ENCODE measurements at regions of chr1 and their contacts with region 1.

Region 1: DNA sequence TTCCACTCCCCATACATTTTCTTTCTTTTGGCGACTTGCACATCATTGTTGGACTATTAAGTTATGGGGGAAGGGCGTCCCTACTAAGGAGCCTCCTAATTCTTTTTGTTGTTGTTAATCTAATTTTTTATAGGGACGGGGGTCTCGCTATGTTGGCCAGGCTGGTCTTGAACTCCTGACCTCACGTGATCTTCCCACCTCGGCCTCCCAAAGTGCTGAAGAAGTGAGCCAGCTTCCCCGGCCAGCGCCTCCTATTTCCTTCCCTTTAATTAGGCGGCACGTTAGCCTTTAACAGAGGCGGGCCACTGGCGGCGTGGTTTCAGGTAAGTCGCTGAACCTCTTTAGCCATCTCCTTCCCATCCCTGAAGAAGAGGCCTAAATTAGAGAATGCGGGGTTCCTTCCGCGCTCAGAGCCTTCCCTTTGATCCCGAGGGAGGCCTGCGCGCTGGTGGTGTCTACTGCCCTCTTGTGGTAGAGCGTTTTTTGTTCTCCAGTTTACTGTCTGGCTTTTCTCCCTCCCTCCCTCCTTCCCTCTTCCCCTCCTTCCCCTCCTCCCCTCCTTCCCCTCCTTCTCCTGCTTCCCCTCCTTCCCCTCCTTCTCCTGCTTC is 38.1 kb downstream of the TNFRSF9 start:
- DNase-seq: peak; percentile 69 to 82
- ATAC-seq: peak; percentile 83
- H3K4me3 ChIP-seq: no peak overlapping the region
- H3K27ac ChIP-seq: no peak overlapping the region
- H3K4me1 ChIP-seq: peaks cover 0 to 3% of the 10 kb centered on the region in 2 donors
- H3K27me3 ChIP-seq: no peaks in the 10 kb centered on the region

Region 2: DNA sequence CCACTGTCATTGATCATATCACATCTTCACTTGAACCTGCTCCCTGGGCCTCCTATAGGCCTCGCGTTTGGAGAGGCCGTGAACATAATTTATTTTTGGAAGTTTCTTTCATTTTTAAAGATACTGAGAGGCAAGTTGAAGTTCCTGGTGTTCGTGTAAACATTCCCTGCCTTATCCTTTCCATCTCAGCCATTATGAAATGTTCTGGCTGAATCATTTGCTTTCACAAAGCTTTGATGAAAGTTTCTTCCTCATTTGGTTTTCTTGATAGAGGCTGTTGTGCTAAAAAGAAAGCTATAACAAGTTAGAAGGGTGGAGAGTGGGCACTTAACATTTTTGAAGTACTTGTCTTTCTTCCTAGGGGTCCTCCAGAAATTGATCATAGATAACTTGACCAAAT is 1101.8 kb before region 1 on chr1:
- intact Hi-C with region 1: no loop called
- DNase-seq: no peak
- ATAC-seq: no peak
- H3K4me3 ChIP-seq: no peak overlapping the region
- H3K27ac ChIP-seq: peak overlapping the region; percentile 32 to 59
- H3K4me1 ChIP-seq: peaks cover 5 to 21% of the 10 kb centered on the region in 2 donors
- H3K27me3 ChIP-seq: no peaks in the 10 kb centered on the region

Region 3: GRCh38 chr1:7667625-7668218 is 234.9 kb before region 1 on chr1:
- intact Hi-C with region 1: loop called (anchors 5 kb)
- DNase-seq: peak; percentile 92 to 96
- ATAC-seq: peak; percentile 90
- H3K4me3 ChIP-seq: no peak overlapping the region
- H3K27ac ChIP-seq: no peak overlapping the region
- H3K4me1 ChIP-seq: no peaks in the 10 kb centered on the region
- H3K27me3 ChIP-seq: no peaks in the 10 kb centered on the region

Region 4: DNA sequence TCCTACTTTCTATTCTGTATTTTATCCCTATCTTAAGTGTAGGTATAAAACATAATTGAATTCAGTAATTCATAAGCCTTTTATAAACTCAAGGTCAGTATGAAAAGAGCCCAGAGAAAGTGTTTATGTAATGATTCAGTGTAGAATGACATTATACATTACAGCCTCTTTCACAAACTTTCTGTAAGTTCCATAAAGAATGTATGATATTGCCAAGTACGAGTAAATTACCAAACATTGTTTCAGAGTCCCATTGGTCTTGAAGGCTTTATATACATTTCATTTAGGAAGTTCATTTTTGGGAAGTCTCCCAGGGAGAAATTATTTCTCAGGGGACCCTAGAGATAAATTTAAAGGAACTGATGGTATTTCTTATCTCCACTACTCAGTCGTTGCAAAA is 169.3 kb before region 1 on chr1:
- intact Hi-C with region 1: no loop called
- DNase-seq: no peak
- ATAC-seq: no peak
- H3K4me3 ChIP-seq: no peak overlapping the region
- H3K27ac ChIP-seq: no peak overlapping the region
- H3K4me1 ChIP-seq: no peaks in the 10 kb centered on the region
- H3K27me3 ChIP-seq: no peaks in the 10 kb centered on the region

Region 5: DNA sequence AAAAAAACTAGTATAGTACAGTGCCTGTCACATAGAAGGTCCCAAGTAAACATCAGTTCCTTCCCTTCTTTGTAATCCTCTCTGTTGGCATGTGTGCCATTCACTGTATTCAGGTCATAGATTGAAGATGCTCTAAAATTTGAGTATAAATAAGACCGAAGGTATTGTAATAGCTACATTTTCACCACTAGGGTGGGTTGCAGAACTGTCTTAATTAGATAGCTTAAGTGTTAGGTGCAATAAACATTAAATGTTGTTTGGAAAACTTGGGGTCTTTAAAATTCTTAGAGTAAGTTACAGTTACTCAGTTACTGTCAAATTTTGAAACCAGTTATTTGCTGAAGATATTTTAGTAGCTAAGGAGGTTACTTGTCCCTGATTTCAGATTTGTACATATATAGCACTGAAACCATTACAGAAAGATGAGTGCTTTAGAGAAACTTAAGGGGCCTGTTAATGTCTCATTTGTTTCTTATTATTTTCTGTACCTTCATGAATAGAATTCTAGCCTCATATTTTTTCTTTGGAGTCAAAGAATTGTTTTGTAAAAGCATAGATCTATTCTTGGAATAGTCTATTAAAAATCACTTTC is 94.2 kb before region 1 on chr1:
- intact Hi-C with region 1: loop called (anchors 1 to 5 kb)
- DNase-seq: no peak
- ATAC-seq: no peak
- H3K4me3 ChIP-seq: no peak overlapping the region
- H3K27ac ChIP-seq: no peak overlapping the region
- H3K4me1 ChIP-seq: no peaks in the 10 kb centered on the region
- H3K27me3 ChIP-seq: no peaks in the 10 kb centered on the region

Region 6: GRCh38 chr1:7856345-7856744 is 46.2 kb before region 1 on chr1:
- intact Hi-C with region 1: no loop called
- DNase-seq: no peak
- ATAC-seq: no peak
- H3K4me3 ChIP-seq: no peak overlapping the region
- H3K27ac ChIP-seq: no peak overlapping the region
- H3K4me1 ChIP-seq: no peaks in the 10 kb centered on the region
- H3K27me3 ChIP-seq: no peaks in the 10 kb centered on the region

Measured in aorta (tissue), 5 donors.